A549 (cell line): ENCODE measurements at regions of chr5 and their contacts with region 1.

Region 1: DNA sequence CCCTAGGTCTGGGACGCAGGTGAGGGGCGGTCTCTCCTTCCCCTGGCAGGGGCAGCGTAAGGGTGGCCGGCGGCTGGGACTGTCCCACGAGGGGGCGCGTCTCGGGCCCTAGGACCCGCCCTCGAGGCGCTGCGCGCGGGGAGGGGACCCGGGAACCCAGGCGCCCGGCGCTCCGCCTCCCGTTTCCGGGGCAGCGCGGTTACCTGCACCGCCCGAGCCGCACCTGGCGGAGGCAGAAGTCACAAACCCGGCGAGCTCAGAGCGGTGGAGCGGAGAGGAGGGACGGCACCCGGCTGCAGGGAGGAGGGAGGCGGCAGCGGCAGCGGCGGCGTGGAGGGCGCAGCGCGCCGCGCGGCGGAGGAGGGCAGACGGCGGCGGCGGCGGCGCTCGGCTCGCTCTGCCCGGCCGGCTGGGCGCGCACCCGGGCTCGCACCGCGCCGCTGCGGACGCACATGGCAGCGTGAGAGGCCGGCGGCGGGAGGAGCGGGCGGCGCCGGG is at the start of gene WWC1:
- DNase-seq: peak; percentile 84 to 86
- ATAC-seq: peak; percentile 72 to 84
- H3K4me3 ChIP-seq: peak within 1 kb of the TSS; percentile 94
- H3K27ac ChIP-seq: peak within 1 kb of the TSS; percentile 97
- H3K4me1 ChIP-seq: peaks cover 67% of the 10 kb centered on the region
- CTCF ChIP-seq: peak; percentile 32; the same call in 2 of the 3 replicates
- EP300 ChIP-seq: no peak
- POLR2A ChIP-seq: peak; percentile 59
- RAD21 ChIP-seq: peak; percentile 16 to 39; a peak in 3 of 5 replicates
- polyA plus RNA-seq, gene WWC1: 75.0 and 98.1 TPM in 2 replicates

Region 2: GRCh38 chr5:168301593-168302388 is 10.3 kb after region 1 on chr5:
- CTCF ChIA-PET with region 1: interaction called, 256 read pairs
- POLR2A ChIA-PET with region 1: interaction called, 10 read pairs
- DNase-seq: peak; percentile 91 to 96
- ATAC-seq: peak; percentile 83 to 84
- H3K4me3 ChIP-seq: peak overlapping the region; percentile 22; the same call in 2 of the 3 replicates
- H3K27ac ChIP-seq: peak overlapping the region; percentile 91 to 92
- H3K4me1 ChIP-seq: peaks cover 98% of the 10 kb centered on the region
- CTCF ChIP-seq: no peak
- EP300 ChIP-seq: peak in 1 of 2 experiments; percentile 82; a peak in 3 of 5 replicates
- POLR2A ChIP-seq: no peak
- RAD21 ChIP-seq: peak in 1 of 2 experiments; percentile 9; a peak in 3 of 5 replicates